GM10248 (cell line): ENCODE measurements at regions of chr6 and their contacts with region 1.

Region 1: DNA sequence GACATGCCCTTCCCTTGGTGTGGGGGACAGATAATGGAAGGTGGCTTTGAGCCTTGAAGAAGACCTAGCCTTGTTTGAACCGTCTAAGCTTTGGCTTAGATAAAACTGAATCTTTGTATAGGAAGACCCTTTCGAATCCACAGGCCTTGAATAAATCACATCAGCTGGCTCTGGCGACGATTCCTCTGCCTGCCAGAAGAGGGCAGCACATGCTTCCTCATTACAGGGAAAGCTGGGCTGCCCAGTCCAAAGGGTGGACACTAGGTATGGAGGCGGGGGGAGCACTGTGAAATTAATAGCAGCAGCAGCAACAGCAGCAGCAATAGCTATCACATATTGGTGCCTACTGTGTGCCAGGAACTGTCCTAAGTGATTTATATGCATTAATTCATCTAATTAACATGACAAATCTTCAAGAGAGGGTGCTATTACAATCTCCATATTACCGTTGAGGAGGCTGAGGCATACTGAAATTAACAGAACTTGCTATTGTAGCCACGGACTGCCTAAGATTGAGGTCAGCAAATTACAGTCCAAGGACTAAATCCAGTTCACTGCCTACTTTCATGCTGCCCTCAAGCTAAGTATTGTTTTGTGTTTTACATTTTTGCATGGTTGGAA is 85.1 kb downstream of the CLIC5 start:
- DNase-seq: peak; percentile 68
- CTCF ChIP-seq: peak; percentile 98

Region 2: GRCh38 chr6:45663551-45664221 is 266.8 kb before region 1 on chr6:
- CTCF ChIA-PET with region 1: no interaction called
- POLR2A ChIA-PET with region 1: no interaction called
- DNase-seq: no peak
- CTCF ChIP-seq: no peak

Region 3: GRCh38 chr6:45915780-45916468 is 14.6 kb before region 1 on chr6:
- CTCF ChIA-PET with region 1: interaction called, 50 read pairs
- POLR2A ChIA-PET with region 1: no interaction called
- DNase-seq: no peak
- CTCF ChIP-seq: no peak

Region 4: DNA sequence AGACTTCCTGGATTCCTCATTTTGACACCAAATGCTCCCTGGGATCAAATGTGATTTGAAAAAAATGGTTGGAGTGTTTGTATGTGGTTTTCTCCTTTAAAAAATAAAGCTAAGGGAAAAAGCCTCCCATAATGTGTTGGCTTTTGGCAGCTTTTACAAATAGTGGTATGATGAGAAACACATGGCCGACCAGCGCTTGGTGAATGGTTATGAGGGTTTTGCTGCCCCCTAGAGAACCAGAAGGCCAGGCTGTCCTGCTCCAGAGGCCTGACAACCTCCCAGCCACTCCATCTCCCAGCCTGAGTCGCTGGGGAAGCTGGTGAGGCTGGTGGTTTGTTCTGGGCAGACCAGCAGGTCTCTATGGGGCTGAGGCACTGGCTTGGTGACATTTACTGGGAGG is 15.8 kb after region 1 on chr6:
- CTCF ChIA-PET with region 1: interaction called, 21 read pairs
- POLR2A ChIA-PET with region 1: no interaction called
- DNase-seq: no peak
- CTCF ChIP-seq: no peak

Region 5: GRCh38 chr6:45951321-45952167 is 21.0 kb after region 1 on chr6:
- CTCF ChIA-PET with region 1: interaction called, 14 read pairs
- POLR2A ChIA-PET with region 1: no interaction called
- DNase-seq: no peak
- CTCF ChIP-seq: no peak